ENCODE measurements at regions of chr13 and their contacts with region 1.

Region 1: DNA sequence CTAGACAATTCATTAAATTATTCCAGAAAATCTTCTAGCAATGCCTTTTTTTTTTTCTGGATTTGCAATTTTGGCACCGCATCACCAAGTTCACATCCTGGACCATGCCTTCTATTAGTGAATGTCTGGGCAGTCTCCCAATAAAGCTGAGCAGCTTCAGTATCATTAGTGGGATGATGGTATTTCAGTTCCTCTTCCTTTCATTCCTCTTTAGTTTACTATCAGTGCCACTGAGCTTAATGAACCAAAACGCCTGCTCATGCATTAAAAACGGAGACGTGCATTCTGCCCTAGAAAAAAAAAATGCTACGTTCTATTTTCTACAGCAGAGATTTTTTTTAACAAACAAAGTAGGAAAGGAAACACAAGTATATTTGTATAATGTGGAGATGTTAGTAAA is 343.0 kb downstream of the PCDH9 start:
- DNase-seq: no peak

Region 2: GRCh38 chr13:66723591-66723990 is 163.5 kb before region 1 on chr13:
- intact Hi-C with region 1: loop called (anchors 10 kb)
- DNase-seq: peak in 1 of 10 donors; percentile 22

Region 3: DNA sequence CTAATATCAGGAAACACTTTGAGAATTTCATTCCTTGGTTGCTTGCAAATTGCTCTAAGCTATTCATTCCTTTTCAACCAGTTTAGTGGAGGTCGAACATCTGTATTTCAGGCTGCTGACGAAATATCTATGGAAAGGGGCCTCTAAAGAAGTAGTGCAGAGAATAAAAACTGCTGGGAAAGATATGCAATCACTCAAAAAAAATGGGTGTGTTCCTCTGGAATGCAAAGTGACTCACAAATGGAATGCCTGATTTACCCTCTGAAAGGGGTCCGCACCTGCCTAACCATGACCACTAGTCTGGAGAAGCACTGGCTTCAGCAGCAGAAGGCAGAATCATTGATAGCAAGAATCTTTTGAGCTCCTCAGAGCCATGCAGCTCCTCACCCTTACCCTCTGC is 213.6 kb after region 1 on chr13:
- intact Hi-C with region 1: no loop called
- DNase-seq: no peak

Measured in posterior cingulate gyrus (tissue), 11 donors.